T-cell (primary cell): ENCODE measurements at regions of chr15 and their contacts with region 1.

Region 1: DNA sequence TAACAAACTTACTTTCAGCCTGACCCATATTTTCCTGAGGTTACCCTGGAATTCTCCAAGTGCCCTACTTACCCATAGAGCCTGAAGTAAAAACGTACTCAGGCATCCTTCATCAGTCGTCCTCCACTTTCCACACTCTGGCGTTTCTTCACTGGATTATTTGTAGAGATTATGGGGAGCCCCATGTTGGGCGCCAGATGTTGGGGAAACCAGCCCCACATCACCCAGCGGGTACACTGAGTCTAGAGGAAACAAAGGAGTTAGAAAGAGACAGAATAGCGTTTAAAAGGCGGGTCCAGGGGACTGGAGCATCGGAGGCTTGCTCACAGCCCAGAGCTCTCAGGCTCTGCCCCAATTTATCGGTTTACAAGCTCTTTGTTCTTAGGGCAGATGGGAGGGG is 9.7 kb upstream of the SLC28A2 start:
- DNase-seq: peak in 1 of 35 experiments; percentile 10
- ATAC-seq: no peak
- H3K4me3 ChIP-seq: no peak overlapping the region
- H3K4me3 Mint-ChIP-seq: no peak overlapping the region
- H3K27ac ChIP-seq: no peak overlapping the region
- H3K27ac Mint-ChIP-seq: no peak overlapping the region
- H3K4me1 ChIP-seq: no peaks in the 10 kb centered on the region
- H3K4me1 Mint-ChIP-seq: no peaks in the 10 kb centered on the region
- H3K27me3 ChIP-seq: peaks cover 0 to 3% of the 10 kb centered on the region in 2 experiments
- H3K27me3 Mint-ChIP-seq: peaks cover 0 to 14% of the 10 kb centered on the region in 2 donors

Region 2: GRCh38 chr15:45162771-45163526 is 79.3 kb before region 1 on chr15:
- CTCF ChIA-PET with region 1: interaction called in 1 of 2 experiments, 14 read pairs
- POLR2A ChIA-PET with region 1: no interaction called
- DNase-seq: peak in 34 of 35 experiments; percentile 11 to 73 (median 45)
- ATAC-seq: peak in 1 of 4 experiments; percentile 15
- H3K4me3 ChIP-seq: no peak overlapping the region
- H3K4me3 Mint-ChIP-seq: no peak overlapping the region
- H3K27ac ChIP-seq: no peak overlapping the region
- H3K27ac Mint-ChIP-seq: no peak overlapping the region
- H3K4me1 ChIP-seq: peaks cover 2 to 30% of the 10 kb centered on the region in 2 experiments
- H3K4me1 Mint-ChIP-seq: peaks cover 12 to 25% (median 22%) of the 10 kb centered on the region in 3 donors
- H3K27me3 ChIP-seq: no peaks in the 10 kb centered on the region
- H3K27me3 Mint-ChIP-seq: no peaks in the 10 kb centered on the region

Region 3: DNA sequence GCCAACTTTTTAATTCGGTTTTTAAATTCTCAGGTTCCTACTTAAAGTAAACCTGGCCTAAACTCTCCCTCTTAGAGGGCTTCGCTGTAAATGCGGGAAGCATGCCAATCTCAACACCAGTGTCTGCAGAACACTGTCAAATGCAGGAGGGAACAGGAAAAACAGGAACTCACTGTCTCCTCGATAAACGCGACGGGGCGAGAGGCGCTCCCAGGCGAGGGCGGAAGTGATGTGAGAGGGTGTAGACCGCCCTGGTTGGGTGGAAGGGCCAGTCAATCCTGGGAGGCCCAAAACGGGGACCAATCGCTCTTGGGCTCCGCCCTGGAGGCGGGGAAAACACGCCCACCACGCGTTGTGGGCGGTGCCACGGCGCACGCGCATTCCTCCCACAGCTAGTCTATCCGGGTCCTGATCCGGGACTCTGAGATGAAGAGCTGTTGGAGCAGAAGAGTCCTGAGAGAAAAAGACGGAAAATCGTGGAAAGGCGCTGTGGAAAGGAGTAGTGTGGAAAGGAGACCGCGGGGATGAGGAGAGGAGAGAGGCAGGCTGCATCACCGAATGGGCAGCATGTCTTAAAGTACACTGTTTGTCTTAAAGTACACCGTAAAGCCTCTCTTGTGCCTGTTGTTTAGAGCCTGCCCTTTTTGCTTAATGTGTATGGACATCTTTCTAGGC is 36.9 kb after region 1 on chr15:
- CTCF ChIA-PET with region 1: no interaction called
- POLR2A ChIA-PET with region 1: no interaction called
- DNase-seq: peak; percentile 89 to 99 (median 94)
- ATAC-seq: peak; percentile 99 to 100 (median 100)
- H3K4me3 ChIP-seq: peak overlapping the region; percentile 65 to 86
- H3K4me3 Mint-ChIP-seq: peak overlapping the region; percentile 85 to 88 (median 88)
- H3K27ac ChIP-seq: peak overlapping the region; percentile 76
- H3K27ac Mint-ChIP-seq: peak overlapping the region; percentile 88 to 95
- H3K4me1 ChIP-seq: peaks cover 9 to 11% of the 10 kb centered on the region in 2 experiments
- H3K4me1 Mint-ChIP-seq: peaks cover 11 to 28% (median 20%) of the 10 kb centered on the region in 3 donors
- H3K27me3 ChIP-seq: peaks cover 0 to 3% of the 10 kb centered on the region in 2 experiments
- H3K27me3 Mint-ChIP-seq: peaks cover 1 to 5% of the 10 kb centered on the region in 2 donors